Breast epithelium (tissue), 4 donors: ENCODE measurements at regions of chr5 and their contacts with region 1.

Region 1: GRCh38 chr5:166602271-166602670 is 1689.2 kb upstream of the WWC1 start:
- DNase-seq: no peak
- H3K4me3 ChIP-seq: no peak overlapping the region
- H3K27ac ChIP-seq: no peak overlapping the region
- H3K4me1 ChIP-seq: no peaks in the 10 kb centered on the region
- H3K27me3 ChIP-seq: no peaks in the 10 kb centered on the region
- CTCF ChIP-seq: no peak
- POLR2A ChIP-seq: no peak

Region 2: DNA sequence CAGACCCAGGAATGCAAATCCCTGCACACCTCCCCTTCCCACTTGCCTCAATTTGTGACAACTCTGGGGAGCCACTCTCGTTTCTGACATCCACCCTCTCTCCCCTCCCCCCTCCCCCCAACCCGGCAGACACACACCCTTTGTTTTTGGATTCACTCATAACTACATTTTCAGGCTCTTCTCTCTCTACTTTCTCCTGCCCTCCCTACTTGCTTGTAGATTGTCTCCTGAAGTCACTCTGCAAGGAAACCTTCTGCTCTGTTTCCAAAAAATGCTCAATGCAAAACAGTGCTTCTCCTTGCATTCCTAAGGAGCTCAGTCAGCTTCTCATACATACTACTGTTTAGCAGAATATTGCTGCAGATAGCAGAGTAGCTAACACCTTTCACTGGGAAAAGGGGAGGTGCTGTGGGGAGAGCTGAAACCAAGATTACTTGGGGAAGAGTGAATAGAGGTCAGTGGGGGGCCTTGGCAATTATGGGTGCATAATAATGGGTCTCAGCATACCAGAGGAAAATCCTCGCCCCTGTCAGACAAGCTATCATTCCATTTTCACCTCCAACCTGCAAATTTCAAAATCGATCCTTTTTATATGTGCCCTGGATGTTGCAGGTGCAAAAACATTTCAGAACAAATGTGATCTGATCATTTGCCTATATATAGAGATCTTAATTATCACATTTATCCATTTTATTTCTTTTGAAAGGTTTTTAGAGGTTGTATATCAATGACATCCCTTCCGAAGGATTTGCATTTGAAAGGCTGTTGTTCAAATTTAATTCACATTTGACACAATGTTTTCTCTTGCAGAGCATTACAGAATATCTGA is 171.6 kb before region 1 on chr5:
- intact Hi-C with region 1: no loop called
- DNase-seq: no peak
- H3K4me3 ChIP-seq: no peak overlapping the region
- H3K27ac ChIP-seq: no peak overlapping the region
- H3K4me1 ChIP-seq: no peaks in the 10 kb centered on the region
- H3K27me3 ChIP-seq: no peaks in the 10 kb centered on the region
- CTCF ChIP-seq: no peak
- POLR2A ChIP-seq: no peak

Region 3: GRCh38 chr5:166581826-166582225 is 20.4 kb before region 1 on chr5:
- intact Hi-C with region 1: no loop called
- DNase-seq: no peak
- H3K4me3 ChIP-seq: no peak overlapping the region
- H3K27ac ChIP-seq: no peak overlapping the region
- H3K4me1 ChIP-seq: no peaks in the 10 kb centered on the region
- H3K27me3 ChIP-seq: no peaks in the 10 kb centered on the region
- CTCF ChIP-seq: no peak
- POLR2A ChIP-seq: no peak

Region 4: DNA sequence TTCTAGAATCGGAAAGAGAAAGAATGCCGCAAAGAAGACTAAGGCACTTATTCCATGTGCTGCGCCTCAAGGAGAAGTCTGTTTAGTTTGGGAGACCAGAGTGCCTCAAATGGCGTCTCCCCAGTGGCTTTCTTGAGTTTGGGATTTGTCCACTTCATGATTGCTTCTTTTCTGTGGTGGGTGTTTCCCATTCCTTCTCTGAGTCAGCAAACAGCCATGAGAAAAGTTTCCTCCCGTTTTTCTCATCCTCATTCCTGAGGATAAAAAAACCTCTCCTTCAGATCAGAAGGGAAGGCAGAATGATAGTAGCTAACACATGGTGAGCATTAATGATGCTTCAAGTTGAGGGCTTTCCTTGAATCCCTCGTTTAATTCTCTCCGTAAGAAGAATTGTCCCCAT is 1413.2 kb after region 1 on chr5:
- intact Hi-C with region 1: loop called (anchors 10 kb)
- DNase-seq: no peak
- H3K4me3 ChIP-seq: no peak overlapping the region
- H3K27ac ChIP-seq: no peak overlapping the region
- H3K4me1 ChIP-seq: no peaks in the 10 kb centered on the region
- H3K27me3 ChIP-seq: peaks cover 0 to 1% of the 10 kb centered on the region in 2 donors
- CTCF ChIP-seq: no peak
- POLR2A ChIP-seq: no peak